B cell (primary cell): ENCODE measurements at regions of chr11 and their contacts with region 1.

Region 1: DNA sequence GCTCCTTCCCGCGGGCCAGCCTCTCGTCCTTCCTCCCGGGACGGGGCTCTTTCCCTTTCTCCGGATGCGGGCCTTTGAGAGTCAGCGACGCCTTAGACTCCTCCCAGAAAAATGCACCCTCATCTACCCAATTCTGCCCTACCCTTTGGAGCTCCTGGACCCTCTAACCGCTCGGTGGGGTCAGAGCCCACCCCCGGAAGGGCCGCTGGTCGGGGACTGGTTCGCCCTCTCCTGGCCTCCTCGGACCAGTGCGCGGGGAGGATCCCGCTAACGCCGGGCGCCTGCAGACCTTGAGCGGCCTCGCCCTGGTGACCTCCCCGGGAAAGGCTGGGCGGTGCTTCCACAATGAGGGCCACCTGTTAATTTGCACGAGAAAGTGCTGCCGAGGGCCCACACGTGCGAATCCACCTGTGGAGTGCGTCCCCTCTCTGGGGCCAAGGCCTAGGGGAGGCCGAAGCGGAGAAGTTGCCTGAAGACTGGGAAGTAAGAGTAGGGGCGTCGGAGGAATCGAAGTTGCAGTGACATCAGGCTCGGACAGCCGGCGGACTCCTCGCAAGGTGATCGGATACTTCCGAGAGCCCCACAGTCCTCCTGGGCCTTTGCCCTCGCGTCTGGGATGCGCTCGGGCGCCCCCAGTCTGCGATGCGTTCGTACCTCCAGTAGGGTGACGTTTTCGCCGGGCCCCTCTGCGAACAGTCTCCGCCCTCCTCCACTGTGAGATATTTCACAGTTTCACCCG is 61.5 kb downstream of the ENDOD1 start:
- DNase-seq: peak; percentile 96
- ATAC-seq: peak; percentile 90
- H3K4me3 ChIP-seq: peak overlapping the region; percentile 52 to 91 (median 82)
- H3K4me3 Mint-ChIP-seq: peak overlapping the region; percentile 95
- H3K27ac ChIP-seq: peak overlapping the region; percentile 88 to 91
- H3K27ac Mint-ChIP-seq: peak overlapping the region; percentile 96
- H3K4me1 ChIP-seq: peaks cover 28 to 43% of the 10 kb centered on the region in 2 donors
- H3K4me1 Mint-ChIP-seq: peaks cover 46% of the 10 kb centered on the region
- H3K27me3 ChIP-seq: no peaks in the 10 kb centered on the region
- H3K27me3 Mint-ChIP-seq: no peaks in the 10 kb centered on the region
- CTCF ChIP-seq: peak; percentile 86

Region 2: GRCh38 chr11:94623120-94623735 is 527.9 kb before region 1 on chr11:
- CTCF ChIA-PET with region 1: no interaction called
- POLR2A ChIA-PET with region 1: no interaction called
- intact Hi-C with region 1: loop called (anchors 2 kb)
- DNase-seq: peak; percentile 49
- ATAC-seq: peak; percentile 47
- H3K4me3 ChIP-seq: no peak overlapping the region
- H3K4me3 Mint-ChIP-seq: no peak overlapping the region
- H3K27ac ChIP-seq: no peak overlapping the region
- H3K27ac Mint-ChIP-seq: no peak overlapping the region
- H3K4me1 ChIP-seq: no peaks in the 10 kb centered on the region
- H3K4me1 Mint-ChIP-seq: no peaks in the 10 kb centered on the region
- H3K27me3 ChIP-seq: peaks cover 0 to 6% (median 0%) of the 10 kb centered on the region in 4 experiments
- H3K27me3 Mint-ChIP-seq: peaks cover 18% of the 10 kb centered on the region
- CTCF ChIP-seq: peak; percentile 34

Region 3: DNA sequence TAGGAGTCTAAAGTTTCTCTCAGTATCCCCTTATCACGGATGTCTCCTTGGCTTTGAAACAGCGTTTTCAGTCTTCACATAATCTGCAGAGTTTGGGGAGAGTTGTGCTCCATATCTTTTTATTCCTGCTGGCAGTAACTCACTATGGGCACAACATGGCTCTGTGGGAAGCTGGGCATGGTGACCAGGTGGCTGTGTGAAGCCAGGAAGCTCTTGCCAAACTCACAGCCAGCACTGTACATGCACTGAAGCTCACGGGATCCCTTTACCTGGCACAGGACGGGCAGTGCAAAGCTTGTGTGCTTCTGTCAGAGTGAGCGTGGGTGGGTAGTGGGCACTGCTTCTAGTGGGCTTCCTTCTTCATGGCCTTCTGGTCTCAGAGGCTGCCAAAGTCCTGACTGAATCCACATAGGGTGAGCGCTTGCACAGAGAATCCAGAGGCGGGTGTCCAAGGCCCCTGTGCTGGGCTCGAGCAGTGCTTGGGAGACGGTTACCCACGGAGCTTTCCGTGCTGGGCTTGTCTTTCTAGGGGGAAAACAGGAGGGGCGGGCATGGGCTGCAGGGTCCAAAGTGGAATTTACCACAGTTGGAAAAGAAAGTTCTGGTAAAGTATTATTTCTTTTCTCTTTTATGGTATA is 136.8 kb before region 1 on chr11:
- CTCF ChIA-PET with region 1: no interaction called
- POLR2A ChIA-PET with region 1: no interaction called
- intact Hi-C with region 1: no loop called
- DNase-seq: no peak
- ATAC-seq: no peak
- H3K4me3 ChIP-seq: no peak overlapping the region
- H3K4me3 Mint-ChIP-seq: no peak overlapping the region
- H3K27ac ChIP-seq: no peak overlapping the region
- H3K27ac Mint-ChIP-seq: no peak overlapping the region
- H3K4me1 ChIP-seq: no peaks in the 10 kb centered on the region
- H3K4me1 Mint-ChIP-seq: no peaks in the 10 kb centered on the region
- H3K27me3 ChIP-seq: peaks cover 0 to 9% (median 4%) of the 10 kb centered on the region in 4 experiments
- H3K27me3 Mint-ChIP-seq: peaks cover 22% of the 10 kb centered on the region
- CTCF ChIP-seq: no peak

Region 4: DNA sequence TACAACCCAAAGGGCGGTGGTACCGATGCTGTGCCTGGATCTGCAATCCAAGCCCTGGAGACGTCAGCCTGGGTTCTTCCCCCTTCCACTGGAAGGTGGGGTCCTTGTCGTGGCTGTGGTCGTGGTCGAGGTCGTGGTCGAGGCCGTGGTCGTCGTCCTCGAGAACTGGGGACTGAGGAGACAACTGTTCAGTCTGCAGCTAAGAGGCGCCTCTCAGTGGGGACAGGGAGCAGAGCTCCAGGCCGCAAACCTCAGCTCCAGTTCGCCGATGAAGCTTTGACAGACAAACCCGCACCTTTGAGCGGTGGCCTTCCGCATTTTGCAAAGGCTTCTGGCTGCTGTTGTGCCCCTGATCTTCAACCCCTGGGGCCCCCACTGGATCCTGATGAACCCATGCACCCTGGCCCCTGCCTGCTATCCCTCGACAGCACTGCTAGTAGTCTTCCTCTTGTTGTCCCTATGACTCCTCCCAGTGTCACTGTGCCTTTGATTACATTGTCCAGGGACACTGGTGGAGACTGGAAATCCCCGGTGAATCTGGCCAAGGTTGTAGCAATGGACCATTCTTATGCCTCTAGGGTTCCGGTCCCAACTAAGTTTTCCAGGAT is 100.4 kb before region 1 on chr11:
- CTCF ChIA-PET with region 1: no interaction called
- POLR2A ChIA-PET with region 1: no interaction called
- intact Hi-C with region 1: no loop called
- DNase-seq: no peak
- ATAC-seq: no peak
- H3K4me3 ChIP-seq: no peak overlapping the region
- H3K4me3 Mint-ChIP-seq: no peak overlapping the region
- H3K27ac ChIP-seq: no peak overlapping the region
- H3K27ac Mint-ChIP-seq: no peak overlapping the region
- H3K4me1 ChIP-seq: peaks cover 3 to 7% of the 10 kb centered on the region in 2 donors
- H3K4me1 Mint-ChIP-seq: peaks cover 13% of the 10 kb centered on the region
- H3K27me3 ChIP-seq: peaks cover 0 to 10% (median 1%) of the 10 kb centered on the region in 4 experiments
- H3K27me3 Mint-ChIP-seq: peaks cover 30% of the 10 kb centered on the region
- CTCF ChIP-seq: no peak

Region 5: DNA sequence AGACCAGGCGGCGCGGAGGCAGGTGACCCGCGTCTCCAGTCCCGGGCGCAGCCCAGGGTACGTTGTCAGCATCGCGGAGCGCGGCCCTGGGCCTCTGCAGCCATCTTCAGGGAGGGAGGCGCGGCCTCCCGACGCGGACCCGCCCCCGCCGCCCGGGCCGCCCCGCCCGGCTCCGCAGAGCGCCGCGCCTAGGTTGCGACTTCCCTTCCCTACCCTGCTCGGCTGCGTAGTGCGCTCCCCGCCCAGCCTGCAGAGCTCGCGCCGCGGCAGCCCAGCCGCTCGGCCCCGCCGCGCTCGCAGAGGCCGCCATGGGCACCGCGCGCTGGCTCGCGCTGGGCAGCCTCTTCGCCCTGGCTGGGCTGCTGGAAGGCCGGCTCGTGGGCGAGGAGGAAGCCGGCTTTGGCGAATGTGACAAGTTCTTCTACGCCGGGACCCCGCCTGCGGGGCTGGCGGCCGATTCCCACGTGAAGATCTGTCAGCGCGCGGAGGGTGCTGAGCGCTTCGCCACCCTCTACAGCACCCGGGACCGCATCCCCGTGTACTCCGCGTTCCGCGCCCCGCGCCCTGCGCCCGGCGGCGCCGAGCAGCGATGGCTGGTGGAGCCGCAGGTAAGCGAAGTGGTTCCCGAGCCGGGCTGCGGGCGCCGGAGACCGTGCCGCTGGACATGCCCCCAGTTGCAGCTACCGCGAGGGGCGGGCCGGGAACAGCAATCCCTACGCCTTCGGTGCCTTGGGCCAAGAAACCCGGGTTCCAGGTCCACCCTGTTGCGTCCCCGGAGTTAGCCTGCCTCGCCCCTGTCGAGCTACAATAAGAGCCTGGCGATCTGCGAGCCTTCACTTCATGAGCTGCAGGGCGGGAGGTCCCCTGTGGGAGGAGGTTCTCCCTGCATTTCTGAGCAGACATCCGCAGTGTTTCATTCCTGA is 61.2 kb before region 1 on chr11 and contains the start of gene ENDOD1:
- CTCF ChIA-PET with region 1: interaction called, 12 read pairs
- POLR2A ChIA-PET with region 1: interaction called, 17 read pairs
- intact Hi-C with region 1: loop called (anchors 1 kb)
- DNase-seq: peak; percentile 93
- ATAC-seq: peak; percentile 94
- H3K4me3 ChIP-seq: peak within 1 kb of the TSS; percentile 13 to 82 (median 79)
- H3K4me3 Mint-ChIP-seq: peak within 1 kb of the TSS; percentile 94
- H3K27ac ChIP-seq: peak within 1 kb of the TSS; percentile 79 to 94
- H3K27ac Mint-ChIP-seq: peak within 1 kb of the TSS; percentile 98
- H3K4me1 ChIP-seq: peaks cover 50 to 52% of the 10 kb centered on the region in 2 donors
- H3K4me1 Mint-ChIP-seq: peaks cover 59% of the 10 kb centered on the region
- H3K27me3 ChIP-seq: no peaks in the 10 kb centered on the region
- H3K27me3 Mint-ChIP-seq: no peaks in the 10 kb centered on the region
- CTCF ChIP-seq: no peak
- total RNA-seq, gene ENDOD1: 11.7 and 12.0 TPM in 2 replicates

Region 6: GRCh38 chr11:95337175-95337957 is 186.3 kb after region 1 on chr11:
- CTCF ChIA-PET with region 1: no interaction called
- POLR2A ChIA-PET with region 1: no interaction called
- intact Hi-C with region 1: loop called (anchors 5 kb)
- DNase-seq: peak; percentile 80
- ATAC-seq: peak; percentile 58
- H3K4me3 ChIP-seq: peak overlapping the region in 4 of 5 experiments; percentile 5 to 51 (median 38)
- H3K4me3 Mint-ChIP-seq: no peak overlapping the region
- H3K27ac ChIP-seq: peak overlapping the region; percentile 67 to 83
- H3K27ac Mint-ChIP-seq: no peak overlapping the region
- H3K4me1 ChIP-seq: peaks cover 21 to 32% of the 10 kb centered on the region in 2 donors
- H3K4me1 Mint-ChIP-seq: peaks cover 5% of the 10 kb centered on the region
- H3K27me3 ChIP-seq: no peaks in the 10 kb centered on the region
- H3K27me3 Mint-ChIP-seq: no peaks in the 10 kb centered on the region
- CTCF ChIP-seq: no peak

Region 7: GRCh38 chr11:95764267-95764898 is 613.3 kb after region 1 on chr11:
- CTCF ChIA-PET with region 1: interaction called, 207 read pairs
- POLR2A ChIA-PET with region 1: interaction called, 3 read pairs
- intact Hi-C with region 1: loop called (anchors 1 kb)
- DNase-seq: peak; percentile 78
- ATAC-seq: peak; percentile 92
- H3K4me3 ChIP-seq: no peak overlapping the region
- H3K4me3 Mint-ChIP-seq: no peak overlapping the region
- H3K27ac ChIP-seq: no peak overlapping the region
- H3K27ac Mint-ChIP-seq: no peak overlapping the region
- H3K4me1 ChIP-seq: peaks cover 7% of the 10 kb centered on the region in 2 donors
- H3K4me1 Mint-ChIP-seq: peaks cover 24% of the 10 kb centered on the region
- H3K27me3 ChIP-seq: no peaks in the 10 kb centered on the region
- H3K27me3 Mint-ChIP-seq: no peaks in the 10 kb centered on the region
- CTCF ChIP-seq: peak; percentile 92

Region 8: GRCh38 chr11:96389720-96390487 is 1238.8 kb after region 1 on chr11 and contains the starts of genes CCDC82 and JRKL:
- CTCF ChIA-PET with region 1: interaction called, 4 read pairs
- POLR2A ChIA-PET with region 1: no interaction called
- intact Hi-C with region 1: loop called (anchors 10 kb)
- DNase-seq: peak; percentile 96
- ATAC-seq: peak; percentile 99
- H3K4me3 ChIP-seq: peak within 1 kb of the TSS; percentile 77 to 89 (median 84)
- H3K4me3 Mint-ChIP-seq: peak within 1 kb of the TSS; percentile 93
- H3K27ac ChIP-seq: peak within 1 kb of the TSS; percentile 82 to 83
- H3K27ac Mint-ChIP-seq: peak within 1 kb of the TSS; percentile 95
- H3K4me1 ChIP-seq: peaks cover 13 to 18% of the 10 kb centered on the region in 2 donors
- H3K4me1 Mint-ChIP-seq: peaks cover 26% of the 10 kb centered on the region
- H3K27me3 ChIP-seq: no peaks in the 10 kb centered on the region
- H3K27me3 Mint-ChIP-seq: no peaks in the 10 kb centered on the region
- CTCF ChIP-seq: no peak
- total RNA-seq, gene CCDC82: 34.1 and 37.9 TPM in 2 replicates
- total RNA-seq, gene JRKL: 12.5 and 12.9 TPM in 2 replicates